CD4-positive, alpha-beta memory T cell (primary cell): ENCODE measurements at regions of chr2 and their contacts with region 1.

Region 1: GRCh38 chr2:109031476-109032228 is 42.6 kb upstream of the EDAR start:
- DNase-seq: peak; percentile 86 to 92 (median 92)
- H3K4me3 ChIP-seq: peak overlapping the region; percentile 14 to 61
- H3K4me3 Mint-ChIP-seq: peak overlapping the region; percentile 74 to 87 (median 86)
- H3K27ac ChIP-seq: peak overlapping the region; percentile 49
- H3K27ac Mint-ChIP-seq: peak overlapping the region; percentile 85 to 95 (median 93)
- H3K4me1 ChIP-seq: peaks cover 71% of the 10 kb centered on the region
- H3K4me1 Mint-ChIP-seq: peaks cover 37 to 81% (median 60%) of the 10 kb centered on the region in 4 donors
- H3K27me3 ChIP-seq: no peaks in the 10 kb centered on the region
- H3K27me3 Mint-ChIP-seq: no peaks in the 10 kb centered on the region

Region 2: GRCh38 chr2:108786354-108787199 is 245.1 kb before region 1 on chr2 and contains the start of gene CCDC138:
- CTCF ChIA-PET with region 1: no interaction called
- POLR2A ChIA-PET with region 1: no interaction called
- intact Hi-C with region 1: loop called (anchors 5 kb)
- DNase-seq: peak; percentile 89 to 91 (median 90)
- H3K4me3 ChIP-seq: peak within 1 kb of the TSS; percentile 37 to 78
- H3K4me3 Mint-ChIP-seq: peak within 1 kb of the TSS; percentile 93 to 100 (median 99)
- H3K27ac ChIP-seq: peak within 1 kb of the TSS; percentile 78
- H3K27ac Mint-ChIP-seq: peak within 1 kb of the TSS; percentile 80 to 99 (median 98)
- H3K4me1 ChIP-seq: peaks cover 15% of the 10 kb centered on the region
- H3K4me1 Mint-ChIP-seq: peaks cover 9 to 20% (median 11%) of the 10 kb centered on the region in 4 donors
- H3K27me3 ChIP-seq: no peaks in the 10 kb centered on the region
- H3K27me3 Mint-ChIP-seq: no peaks in the 10 kb centered on the region
- total RNA-seq, gene CCDC138: 4.2 to 4.9 TPM

Region 3: DNA sequence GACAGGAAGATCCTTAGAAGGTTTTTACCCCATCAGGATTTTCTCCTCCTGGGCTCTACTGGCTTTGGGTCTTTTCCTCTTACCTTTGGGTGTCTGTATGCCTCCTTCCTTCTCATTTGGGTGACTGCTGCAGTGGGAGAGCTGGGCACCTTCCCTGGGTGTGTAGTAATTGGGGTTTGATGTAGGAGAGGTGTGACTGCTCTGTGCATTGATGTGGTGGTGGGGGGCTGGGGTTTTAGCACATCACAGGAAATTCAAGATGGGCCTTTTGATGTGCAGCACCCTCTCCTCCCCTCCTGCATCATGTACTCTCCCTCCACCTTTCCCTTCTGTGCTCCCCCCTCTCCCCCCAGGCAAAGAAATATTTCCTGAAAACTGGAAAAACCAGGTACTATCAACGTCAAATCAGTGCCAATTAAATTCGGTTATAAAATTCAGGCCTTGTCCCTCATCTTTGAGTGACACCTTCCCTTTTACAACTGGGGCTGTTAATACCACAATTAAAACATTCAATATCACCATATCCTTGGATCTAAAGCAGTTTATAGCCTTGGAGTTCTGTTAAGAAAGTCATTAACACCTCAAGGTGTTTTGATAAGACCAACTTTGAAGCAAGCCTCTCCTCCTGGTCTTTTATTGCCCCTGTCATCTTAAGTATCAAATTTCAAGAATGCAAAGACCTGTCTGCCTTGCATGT is 66.0 kb before region 1 on chr2:
- CTCF ChIA-PET with region 1: no interaction called
- POLR2A ChIA-PET with region 1: interaction called, 14 read pairs
- intact Hi-C with region 1: no loop called
- DNase-seq: peak; percentile 54 to 68 (median 64)
- H3K4me3 ChIP-seq: no peak overlapping the region
- H3K4me3 Mint-ChIP-seq: peak overlapping the region; percentile 56 to 86 (median 77)
- H3K27ac ChIP-seq: no peak overlapping the region
- H3K27ac Mint-ChIP-seq: peak overlapping the region; percentile 19 to 89 (median 43)
- H3K4me1 ChIP-seq: peaks cover 51% of the 10 kb centered on the region
- H3K4me1 Mint-ChIP-seq: peaks cover 45 to 81% (median 66%) of the 10 kb centered on the region in 4 donors
- H3K27me3 ChIP-seq: no peaks in the 10 kb centered on the region
- H3K27me3 Mint-ChIP-seq: no peaks in the 10 kb centered on the region

Region 4: DNA sequence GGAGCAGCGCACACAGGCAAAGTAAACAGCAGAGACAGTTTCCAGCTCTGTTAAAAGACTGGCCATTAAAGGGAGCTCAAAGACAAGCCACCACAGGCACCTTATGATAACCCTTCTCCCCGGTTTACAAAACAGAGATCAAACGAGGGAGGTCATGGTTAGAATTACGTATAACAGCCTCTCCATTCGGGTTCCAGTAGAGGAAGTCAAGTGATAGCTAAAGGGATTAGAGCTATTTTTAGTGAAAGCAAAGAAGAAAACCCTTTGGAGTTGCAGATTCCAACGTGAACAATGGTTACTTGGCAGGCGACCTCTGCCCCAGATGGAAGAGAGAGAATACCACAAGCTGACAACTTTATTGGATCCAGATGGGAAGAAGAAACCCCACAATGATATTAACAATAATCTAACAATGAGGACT is 11.4 kb before region 1 on chr2:
- CTCF ChIA-PET with region 1: interaction called, 14 read pairs
- POLR2A ChIA-PET with region 1: interaction called, 29 read pairs
- intact Hi-C with region 1: no loop called
- DNase-seq: peak in 4 of 5 donors; percentile 36 to 50 (median 46)
- H3K4me3 ChIP-seq: no peak overlapping the region
- H3K4me3 Mint-ChIP-seq: peak overlapping the region in 4 of 8 donors; percentile 3 to 57 (median 41)
- H3K27ac ChIP-seq: no peak overlapping the region
- H3K27ac Mint-ChIP-seq: peak overlapping the region in 5 of 7 donors; percentile 1 to 76 (median 38)
- H3K4me1 ChIP-seq: peaks cover 11% of the 10 kb centered on the region
- H3K4me1 Mint-ChIP-seq: peaks cover 11 to 24% (median 15%) of the 10 kb centered on the region in 4 donors
- H3K27me3 ChIP-seq: no peaks in the 10 kb centered on the region
- H3K27me3 Mint-ChIP-seq: no peaks in the 10 kb centered on the region

Region 5: GRCh38 chr2:109079590-109079989 is 47.9 kb after region 1 on chr2:
- CTCF ChIA-PET with region 1: no interaction called
- POLR2A ChIA-PET with region 1: interaction called, 3 read pairs
- intact Hi-C with region 1: loop called (anchors 5 kb)
- DNase-seq: no peak
- H3K4me3 ChIP-seq: no peak overlapping the region
- H3K4me3 Mint-ChIP-seq: no peak overlapping the region
- H3K27ac ChIP-seq: no peak overlapping the region
- H3K27ac Mint-ChIP-seq: no peak overlapping the region
- H3K4me1 ChIP-seq: peaks cover 6% of the 10 kb centered on the region
- H3K4me1 Mint-ChIP-seq: peaks cover 3 to 11% (median 6%) of the 10 kb centered on the region in 4 donors
- H3K27me3 ChIP-seq: no peaks in the 10 kb centered on the region
- H3K27me3 Mint-ChIP-seq: no peaks in the 10 kb centered on the region

Region 6: GRCh38 chr2:109143214-109144187 is 111.8 kb after region 1 on chr2:
- CTCF ChIA-PET with region 1: no interaction called
- POLR2A ChIA-PET with region 1: interaction called, 7 read pairs
- intact Hi-C with region 1: loop called (anchors 5 kb)
- DNase-seq: peak; percentile 73 to 87 (median 77)
- H3K4me3 ChIP-seq: peak overlapping the region in 1 of 2 donors; percentile 16
- H3K4me3 Mint-ChIP-seq: peak overlapping the region; percentile 29 to 85 (median 64)
- H3K27ac ChIP-seq: no peak overlapping the region
- H3K27ac Mint-ChIP-seq: peak overlapping the region; percentile 45 to 90 (median 75)
- H3K4me1 ChIP-seq: peaks cover 24% of the 10 kb centered on the region
- H3K4me1 Mint-ChIP-seq: peaks cover 10 to 35% (median 25%) of the 10 kb centered on the region in 4 donors
- H3K27me3 ChIP-seq: peaks cover 3% of the 10 kb centered on the region
- H3K27me3 Mint-ChIP-seq: peaks cover 19 to 21% of the 10 kb centered on the region in 2 donors

Region 7: DNA sequence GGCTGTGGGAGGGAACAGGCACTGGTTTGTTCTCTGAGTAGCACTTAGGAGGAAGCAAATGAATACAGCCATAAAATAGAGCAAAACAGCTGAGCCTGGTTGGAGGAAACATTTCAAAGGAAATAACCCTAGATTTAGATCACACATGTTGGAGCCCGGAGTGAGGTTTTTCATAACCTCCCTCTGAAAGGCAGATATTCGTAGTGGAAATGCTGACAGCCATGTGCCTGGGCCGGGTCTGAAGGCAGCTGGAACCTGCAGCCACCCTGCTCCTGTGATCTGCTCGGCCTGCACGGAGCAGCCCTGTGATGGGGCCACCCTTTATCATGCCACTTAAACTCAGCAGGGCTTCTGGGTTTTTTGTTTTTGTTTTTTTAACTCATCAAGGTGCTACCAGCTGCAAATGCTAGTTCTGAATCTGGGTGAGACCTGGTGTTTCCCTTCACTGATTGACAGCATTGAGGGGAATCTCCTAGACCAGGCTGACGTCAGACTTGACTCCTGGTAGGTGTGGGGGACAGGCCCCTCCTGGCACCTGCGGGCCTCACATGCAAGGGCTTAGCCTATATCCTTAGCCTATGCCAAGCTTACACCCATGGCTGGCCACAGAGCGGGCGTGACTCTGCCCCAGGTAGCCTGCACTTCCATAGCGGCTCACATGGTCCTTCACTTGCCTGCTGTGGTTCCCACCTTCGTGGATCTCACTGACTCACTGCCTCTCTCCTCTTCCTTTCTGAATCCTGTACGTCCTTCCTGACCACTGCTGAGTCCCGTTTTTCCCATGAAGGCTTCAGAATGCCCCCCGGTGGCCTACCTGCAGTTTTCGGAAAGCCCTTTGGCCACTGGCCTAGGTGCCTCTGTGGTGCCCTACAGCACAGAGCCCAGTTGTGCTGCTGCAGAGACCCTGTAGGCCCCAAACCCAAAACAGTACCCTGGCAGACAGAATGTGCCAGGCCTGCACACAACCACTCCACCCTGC is 364.8 kb after region 1 on chr2:
- CTCF ChIA-PET with region 1: no interaction called
- POLR2A ChIA-PET with region 1: no interaction called
- intact Hi-C with region 1: no loop called
- DNase-seq: no peak
- H3K4me3 ChIP-seq: no peak overlapping the region
- H3K4me3 Mint-ChIP-seq: no peak overlapping the region
- H3K27ac ChIP-seq: no peak overlapping the region
- H3K27ac Mint-ChIP-seq: peak overlapping the region in 1 of 7 donors; percentile 52
- H3K4me1 ChIP-seq: no peaks in the 10 kb centered on the region
- H3K4me1 Mint-ChIP-seq: peaks cover 0 to 4% (median 0%) of the 10 kb centered on the region in 4 donors
- H3K27me3 ChIP-seq: no peaks in the 10 kb centered on the region
- H3K27me3 Mint-ChIP-seq: peaks cover 0 to 7% of the 10 kb centered on the region in 2 donors